MCF 10A (cell line): ENCODE measurements at regions of chr2 and their contacts with region 1.

Region 1: DNA sequence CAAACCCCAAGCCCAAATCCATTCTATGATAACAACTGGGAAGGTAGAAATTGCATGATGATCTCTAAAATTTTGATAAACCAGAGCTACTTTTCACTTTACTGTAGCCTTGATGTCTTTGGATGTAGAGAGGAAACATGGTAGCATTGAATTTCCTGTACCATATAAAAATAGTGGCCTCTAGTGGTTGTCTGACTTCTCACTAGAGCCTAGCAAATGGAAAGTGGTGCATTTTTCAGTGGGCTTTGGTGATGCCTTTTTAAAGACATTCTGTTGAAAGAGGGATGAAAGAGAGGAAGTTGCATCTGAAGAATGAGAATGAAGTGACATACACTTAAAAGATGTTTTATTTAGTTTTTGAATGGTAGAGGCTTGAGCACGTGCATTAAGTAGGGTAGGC is 662.2 kb downstream of the XIRP2 start:
- DNase-seq: peak; percentile 20
- H3K4me3 Mint-ChIP-seq: no peak overlapping the region
- H3K27ac Mint-ChIP-seq: no peak overlapping the region
- H3K4me1 Mint-ChIP-seq: no peaks in the 10 kb centered on the region
- H3K27me3 Mint-ChIP-seq: no peaks in the 10 kb centered on the region
- CTCF ChIP-seq: peak; percentile 26

Region 2: DNA sequence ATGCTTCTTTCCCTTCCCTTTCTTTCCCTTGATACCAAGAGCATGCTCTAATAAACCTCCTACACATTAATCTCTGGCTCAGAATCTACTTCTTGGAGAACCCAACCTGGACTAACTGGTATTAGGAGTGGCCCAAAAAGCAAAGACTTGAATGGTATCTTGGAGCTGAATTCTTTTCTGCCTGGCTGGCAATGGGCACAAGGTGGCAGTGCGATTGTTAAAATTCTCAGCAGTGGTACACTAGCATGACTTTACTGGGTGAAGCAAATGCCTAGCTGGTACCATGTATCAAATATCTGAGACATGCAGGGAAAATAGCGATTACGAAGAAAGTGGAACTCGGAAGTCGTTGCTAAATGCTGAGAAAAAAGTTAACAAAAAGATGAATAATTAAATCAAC is 286.1 kb before region 1 on chr2:
- CTCF ChIA-PET with region 1: interaction called, 3 read pairs
- POLR2A ChIA-PET with region 1: no interaction called
- intact Hi-C with region 1: loop called (anchors 10 kb)
- DNase-seq: peak; percentile 35
- H3K4me3 Mint-ChIP-seq: no peak overlapping the region
- H3K27ac Mint-ChIP-seq: no peak overlapping the region
- H3K4me1 Mint-ChIP-seq: no peaks in the 10 kb centered on the region
- H3K27me3 Mint-ChIP-seq: peaks cover 49% of the 10 kb centered on the region
- CTCF ChIP-seq: peak; percentile 40

Region 3: GRCh38 chr2:167534443-167534842 is 16.0 kb before region 1 on chr2:
- CTCF ChIA-PET with region 1: interaction called, 10 read pairs
- POLR2A ChIA-PET with region 1: no interaction called
- intact Hi-C with region 1: no loop called
- DNase-seq: no peak
- H3K4me3 Mint-ChIP-seq: no peak overlapping the region
- H3K27ac Mint-ChIP-seq: no peak overlapping the region
- H3K4me1 Mint-ChIP-seq: no peaks in the 10 kb centered on the region
- H3K27me3 Mint-ChIP-seq: peaks cover 10% of the 10 kb centered on the region
- CTCF ChIP-seq: no peak